ENCODE measurements at regions of chr15 and their contacts with region 1.

Region 1: GRCh38 chr15:74768771-74769342 is 13.0 kb upstream of the CSK start:
- DNase-seq: no peak
- H3K4me3 ChIP-seq: no peak overlapping the region
- H3K27ac ChIP-seq: no peak overlapping the region
- H3K4me1 ChIP-seq: no peaks in the 10 kb centered on the region
- H3K27me3 ChIP-seq: no peaks in the 10 kb centered on the region
- CTCF ChIP-seq: peak; percentile 83 to 93 (median 88)

Region 2: GRCh38 chr15:74635228-74635627 is 133.6 kb before region 1 on chr15:
- intact Hi-C with region 1: loop called (anchors 1 kb)
- DNase-seq: no peak
- H3K4me3 ChIP-seq: no peak overlapping the region
- H3K27ac ChIP-seq: no peak overlapping the region
- H3K4me1 ChIP-seq: no peaks in the 10 kb centered on the region
- H3K27me3 ChIP-seq: no peaks in the 10 kb centered on the region
- CTCF ChIP-seq: peak; percentile 76 to 83 (median 81)

Region 3: DNA sequence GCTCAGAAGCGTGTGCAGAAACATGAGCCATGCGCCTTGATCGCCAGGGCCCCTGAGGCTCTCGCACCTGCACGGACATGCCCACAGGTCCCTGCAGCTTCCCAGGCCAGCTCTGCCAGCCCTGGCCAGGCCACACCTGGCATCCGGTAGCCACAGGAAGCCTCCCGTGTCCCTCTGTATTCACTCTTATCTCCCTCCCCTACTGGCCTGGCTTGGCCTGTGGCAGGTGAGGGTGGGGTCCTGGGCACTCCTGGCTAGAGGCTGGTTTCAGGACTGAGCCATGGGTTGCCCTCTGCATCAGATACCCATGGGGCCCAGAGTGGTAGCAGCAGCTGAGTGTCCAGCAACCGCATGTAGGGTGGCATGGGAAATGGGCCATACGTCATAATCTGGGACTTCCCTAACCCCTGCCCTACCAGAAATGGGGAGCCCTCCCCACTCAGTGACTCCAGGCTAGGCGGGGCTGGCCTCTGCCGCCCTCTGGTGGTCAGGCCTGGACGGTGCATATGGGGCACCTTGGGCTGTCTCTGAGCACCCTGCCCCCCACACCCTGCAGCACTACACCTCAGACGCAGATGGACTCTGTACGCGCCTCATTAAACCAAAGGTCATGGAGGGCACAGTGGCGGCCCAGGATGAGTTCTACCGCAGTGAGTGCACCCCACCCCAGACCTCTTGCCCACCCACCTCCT is 31.1 kb after region 1 on chr15:
- intact Hi-C with region 1: loop called (anchors 1 kb)
- DNase-seq: peak; percentile 55 to 89
- H3K4me3 ChIP-seq: no peak overlapping the region
- H3K27ac ChIP-seq: no peak overlapping the region
- H3K4me1 ChIP-seq: no peaks in the 10 kb centered on the region
- H3K27me3 ChIP-seq: no peaks in the 10 kb centered on the region
- CTCF ChIP-seq: peak; percentile 93 to 97 (median 95)

Region 4: DNA sequence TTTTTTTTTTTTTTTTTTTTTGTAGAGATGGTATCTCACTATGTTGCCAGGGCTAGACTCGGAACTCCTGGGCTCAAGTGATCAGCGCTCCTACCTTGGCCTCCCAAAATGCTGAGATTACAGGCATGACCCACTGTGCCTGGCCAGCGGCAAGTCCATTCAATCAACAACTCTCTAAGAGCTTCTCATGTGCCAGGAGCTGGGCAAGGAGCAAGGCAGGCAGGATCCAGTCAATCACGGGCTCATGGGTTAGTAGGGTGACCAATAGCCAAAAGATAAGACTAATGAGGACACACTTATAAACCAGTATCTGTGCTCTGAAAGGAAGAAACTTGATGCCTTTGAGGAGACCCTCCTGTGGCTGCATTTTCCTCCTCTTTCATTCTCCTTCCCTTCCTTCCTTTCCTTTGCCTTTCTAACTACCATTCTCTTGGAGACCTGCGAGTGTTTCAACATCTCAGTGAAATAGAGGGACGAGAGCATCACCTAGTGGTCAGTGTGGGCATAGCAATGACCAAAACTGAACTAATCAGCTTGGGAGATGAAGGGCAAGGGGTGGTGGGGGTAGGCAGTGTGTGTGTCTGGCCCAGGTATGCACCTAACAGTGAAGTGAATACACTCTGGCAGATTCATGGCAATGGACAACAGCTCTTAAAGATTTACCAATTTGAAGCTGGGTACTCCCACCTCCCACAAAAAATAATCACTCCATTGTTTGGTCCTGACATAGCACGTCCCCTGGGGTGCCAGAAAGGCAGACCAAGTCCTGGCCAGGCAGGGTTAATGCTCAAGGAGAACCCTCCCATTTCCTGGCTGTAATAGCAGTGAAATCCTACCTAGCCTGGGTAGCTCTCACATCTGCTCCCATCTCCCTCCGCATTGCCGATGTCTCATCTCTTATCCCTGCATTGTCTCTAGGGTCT is 181.5 kb after region 1 on chr15:
- intact Hi-C with region 1: loop called (anchors 1 kb)
- DNase-seq: peak in 1 of 2 donors; percentile 90
- H3K4me3 ChIP-seq: no peak overlapping the region
- H3K27ac ChIP-seq: no peak overlapping the region
- H3K4me1 ChIP-seq: peaks cover 2 to 6% of the 10 kb centered on the region in 2 donors
- H3K27me3 ChIP-seq: no peaks in the 10 kb centered on the region
- CTCF ChIP-seq: peak; percentile 96 to 99 (median 99)

Measured in ascending aorta (tissue), 2 donors.